ENCODE measurements at regions of chr20 and their contacts with region 1.

Region 1: GRCh38 chr20:49219089-49219923 is at the start of gene DDX27:
- DNase-seq: peak; percentile 99
- H3K4me3 Mint-ChIP-seq: peak within 1 kb of the TSS; percentile 94
- H3K27ac Mint-ChIP-seq: peak within 1 kb of the TSS; percentile 97
- H3K4me1 Mint-ChIP-seq: peaks cover 18% of the 10 kb centered on the region
- H3K27me3 Mint-ChIP-seq: peaks cover 4% of the 10 kb centered on the region
- total RNA-seq, gene DDX27: 56.5 and 56.9 TPM in 2 replicates

Region 2: DNA sequence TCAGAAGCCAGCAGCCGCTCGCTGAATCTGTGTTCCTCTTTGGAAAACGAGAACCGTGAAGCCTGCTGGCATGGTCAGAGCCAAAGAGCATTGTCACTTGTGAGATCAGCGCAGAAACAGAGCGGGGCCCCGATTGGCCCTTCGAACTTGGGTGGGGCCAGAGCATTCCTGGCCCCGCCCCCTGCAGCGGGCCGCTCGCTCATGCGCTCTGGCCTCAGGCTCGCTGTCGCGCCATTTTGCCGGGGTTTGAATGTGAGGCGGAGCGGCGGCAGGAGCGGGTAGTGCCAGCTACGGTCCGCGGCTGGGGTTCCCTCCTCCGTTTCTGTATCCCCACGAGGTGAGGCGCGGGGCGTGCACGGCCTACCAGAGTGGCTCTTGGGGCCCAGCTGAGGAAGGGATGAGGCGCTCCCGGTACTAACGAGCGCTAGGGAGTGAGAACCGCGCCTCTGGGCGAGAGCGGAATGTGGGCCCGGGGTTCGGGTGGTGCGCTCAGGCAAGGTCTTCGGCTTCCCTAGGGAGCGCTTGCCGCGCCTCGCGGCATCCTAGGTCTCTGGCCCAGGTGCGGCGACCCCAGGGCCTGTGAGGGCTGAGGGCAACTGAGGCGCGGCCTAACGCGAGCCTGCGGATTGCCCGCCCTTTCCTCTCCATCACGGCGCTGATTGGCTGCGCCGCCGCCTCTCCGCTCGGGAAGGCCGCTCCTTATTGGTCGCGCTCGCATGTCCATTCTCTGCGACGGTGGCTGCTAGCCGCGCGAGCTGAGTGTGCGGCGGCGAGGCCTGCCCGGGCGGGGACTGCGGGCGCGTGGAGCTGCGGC is 173.0 kb before region 1 on chr20 and contains the start of gene CSE1L:
- intact Hi-C with region 1: loop called (anchors 1 kb)
- DNase-seq: peak; percentile 99
- H3K4me3 Mint-ChIP-seq: peak within 1 kb of the TSS; percentile 99
- H3K27ac Mint-ChIP-seq: peak within 1 kb of the TSS; percentile 100
- H3K4me1 Mint-ChIP-seq: peaks cover 28% of the 10 kb centered on the region
- H3K27me3 Mint-ChIP-seq: no peaks in the 10 kb centered on the region
- total RNA-seq, gene CSE1L: 135 and 136 TPM in 2 replicates

Region 3: GRCh38 chr20:49132995-49133478 is 86.3 kb before region 1 on chr20:
- intact Hi-C with region 1: loop called (anchors 1 kb)
- DNase-seq: peak; percentile 80
- H3K4me3 Mint-ChIP-seq: no peak overlapping the region
- H3K27ac Mint-ChIP-seq: peak overlapping the region; percentile 2
- H3K4me1 Mint-ChIP-seq: peaks cover 10% of the 10 kb centered on the region
- H3K27me3 Mint-ChIP-seq: no peaks in the 10 kb centered on the region

Region 4: GRCh38 chr20:49166534-49167449 is 52.5 kb before region 1 on chr20:
- intact Hi-C with region 1: loop called (anchors 10 kb)
- DNase-seq: peak; percentile 69
- H3K4me3 Mint-ChIP-seq: peak overlapping the region; percentile 72
- H3K27ac Mint-ChIP-seq: peak overlapping the region; percentile 90
- H3K4me1 Mint-ChIP-seq: peaks cover 49% of the 10 kb centered on the region
- H3K27me3 Mint-ChIP-seq: no peaks in the 10 kb centered on the region

Region 5: GRCh38 chr20:49237531-49237930 is 18.2 kb after region 1 on chr20:
- intact Hi-C with region 1: no loop called
- DNase-seq: no peak
- H3K4me3 Mint-ChIP-seq: no peak overlapping the region
- H3K27ac Mint-ChIP-seq: no peak overlapping the region
- H3K4me1 Mint-ChIP-seq: no peaks in the 10 kb centered on the region
- H3K27me3 Mint-ChIP-seq: no peaks in the 10 kb centered on the region

Measured in activated CD4-positive, alpha-beta T cell treated with anti-CD3 and anti-CD28 coated beads, Interleukin-2, amount 10 ng/mL, durations not matched to agents 24 days and 14 days (primary cell).